Panc1 (cell line): ENCODE measurements at regions of chr7 and their contacts with region 1.

Region 1: DNA sequence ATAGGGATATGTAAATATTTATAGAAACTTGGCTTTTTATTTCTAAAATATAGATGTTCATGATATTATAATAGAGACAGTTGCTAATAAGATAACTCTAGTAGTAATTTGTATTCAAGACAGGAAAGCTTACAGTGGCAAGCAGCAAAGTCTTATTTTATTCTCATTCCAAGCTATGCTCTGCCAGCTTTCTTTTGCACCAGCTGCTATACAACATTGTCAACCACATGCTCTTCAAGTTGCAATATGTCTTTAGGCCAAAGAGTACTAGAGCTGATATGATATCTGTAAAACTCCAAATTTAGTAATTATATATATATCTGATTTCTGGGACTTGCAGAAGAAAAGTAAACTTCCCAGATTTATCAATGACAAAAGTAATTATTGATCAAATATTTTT is 350.1 kb downstream of the HGF start:
- DNase-seq: no peak
- ATAC-seq: no peak
- H3K4me3 ChIP-seq: no peak overlapping the region
- H3K27ac ChIP-seq: no peak overlapping the region
- H3K4me1 ChIP-seq: no peaks in the 10 kb centered on the region; the same call in 1 of the 2 replicates
- H3K27me3 ChIP-seq: no peaks in the 10 kb centered on the region
- CTCF ChIP-seq: no peak

Region 2: GRCh38 chr7:80910228-80910627 is 509.5 kb before region 1 on chr7:
- CTCF ChIA-PET with region 1: no interaction called
- POLR2A ChIA-PET with region 1: interaction called, 10 read pairs
- in situ Hi-C with region 1: no loop called
- intact Hi-C with region 1: no loop called
- DNase-seq: no peak
- ATAC-seq: no peak
- H3K4me3 ChIP-seq: no peak overlapping the region
- H3K27ac ChIP-seq: peak overlapping the region; percentile 87
- H3K4me1 ChIP-seq: peaks cover 83% of the 10 kb centered on the region
- H3K27me3 ChIP-seq: no peaks in the 10 kb centered on the region
- CTCF ChIP-seq: no peak

Region 3: GRCh38 chr7:81439591-81439990 is 19.9 kb after region 1 on chr7:
- CTCF ChIA-PET with region 1: no interaction called
- POLR2A ChIA-PET with region 1: no interaction called
- in situ Hi-C with region 1: no loop called
- intact Hi-C with region 1: no loop called
- DNase-seq: no peak
- ATAC-seq: no peak
- H3K4me3 ChIP-seq: no peak overlapping the region
- H3K27ac ChIP-seq: peak overlapping the region; percentile 40; the same call in 1 of the 2 replicates
- H3K4me1 ChIP-seq: no peaks in the 10 kb centered on the region
- H3K27me3 ChIP-seq: no peaks in the 10 kb centered on the region
- CTCF ChIP-seq: no peak